Activated CD4-positive, alpha-beta T cell treated with anti-CD3 and anti-CD28 coated beads, Interleukin-2, amount 10 ng/mL, durations not matched to agents 24 days and 14 days (primary cell): ENCODE measurements at regions of chr20 and their contacts with region 1.

Region 1: DNA sequence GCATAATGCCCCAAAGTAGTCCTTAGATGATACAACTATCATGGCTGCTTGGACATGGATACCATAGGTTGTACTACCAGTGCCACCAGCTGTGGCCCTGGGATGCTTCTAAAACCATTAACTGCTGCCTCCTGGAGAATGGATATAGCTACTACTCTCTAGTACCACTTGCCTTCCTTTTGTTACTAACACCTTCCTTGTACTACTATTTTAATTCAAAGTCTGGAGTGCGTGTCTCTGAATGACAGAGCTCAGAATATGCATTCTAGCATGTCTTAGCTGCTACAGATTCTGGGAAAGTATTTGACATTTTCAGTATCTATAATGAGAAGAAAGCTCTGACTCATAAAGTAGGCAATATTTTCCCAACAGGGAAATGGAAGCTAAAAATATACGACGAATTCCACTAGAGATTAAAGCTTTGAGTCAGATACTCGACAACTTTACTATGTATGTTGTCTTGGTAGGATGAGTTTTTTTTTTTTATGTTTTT is 112.3 kb downstream of the PFDN4 start:
- DNase-seq: no peak
- H3K4me3 Mint-ChIP-seq: no peak overlapping the region
- H3K27ac Mint-ChIP-seq: peak overlapping the region; percentile 62
- H3K4me1 Mint-ChIP-seq: peaks cover 25% of the 10 kb centered on the region
- H3K27me3 Mint-ChIP-seq: no peaks in the 10 kb centered on the region

Region 2: DNA sequence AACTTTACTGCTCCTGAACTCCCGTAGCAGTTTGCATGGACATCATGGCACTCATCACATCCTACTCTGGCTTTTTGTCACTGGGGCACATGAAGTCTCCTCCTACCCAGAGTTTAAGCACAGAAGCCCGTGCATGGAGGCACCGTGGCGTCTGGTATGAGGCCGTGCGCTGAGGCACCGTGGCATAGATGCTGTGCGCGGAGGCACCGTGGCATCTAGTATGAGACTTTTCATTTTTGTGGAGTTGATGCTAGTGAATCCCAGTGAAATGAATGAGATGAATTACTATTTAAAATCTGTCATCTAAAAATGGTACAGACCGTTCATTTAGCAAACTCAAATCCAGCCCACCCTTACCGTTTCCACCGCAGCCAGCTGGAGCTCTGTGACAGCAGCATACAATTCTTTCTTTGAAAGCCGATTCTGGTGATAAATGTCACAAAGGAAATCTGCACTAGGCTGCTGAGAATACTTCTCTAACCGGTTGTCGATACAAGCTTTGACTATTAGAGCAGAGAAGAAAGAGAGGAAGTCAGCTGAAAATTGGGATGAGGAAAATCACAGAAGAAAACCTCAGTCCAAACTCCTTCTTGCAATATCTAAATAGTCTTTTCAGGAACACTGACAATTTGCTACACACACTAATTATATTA is 157.7 kb before region 1 on chr20:
- intact Hi-C with region 1: no loop called
- DNase-seq: no peak
- H3K4me3 Mint-ChIP-seq: no peak overlapping the region
- H3K27ac Mint-ChIP-seq: no peak overlapping the region
- H3K4me1 Mint-ChIP-seq: no peaks in the 10 kb centered on the region
- H3K27me3 Mint-ChIP-seq: peaks cover 23% of the 10 kb centered on the region

Region 3: DNA sequence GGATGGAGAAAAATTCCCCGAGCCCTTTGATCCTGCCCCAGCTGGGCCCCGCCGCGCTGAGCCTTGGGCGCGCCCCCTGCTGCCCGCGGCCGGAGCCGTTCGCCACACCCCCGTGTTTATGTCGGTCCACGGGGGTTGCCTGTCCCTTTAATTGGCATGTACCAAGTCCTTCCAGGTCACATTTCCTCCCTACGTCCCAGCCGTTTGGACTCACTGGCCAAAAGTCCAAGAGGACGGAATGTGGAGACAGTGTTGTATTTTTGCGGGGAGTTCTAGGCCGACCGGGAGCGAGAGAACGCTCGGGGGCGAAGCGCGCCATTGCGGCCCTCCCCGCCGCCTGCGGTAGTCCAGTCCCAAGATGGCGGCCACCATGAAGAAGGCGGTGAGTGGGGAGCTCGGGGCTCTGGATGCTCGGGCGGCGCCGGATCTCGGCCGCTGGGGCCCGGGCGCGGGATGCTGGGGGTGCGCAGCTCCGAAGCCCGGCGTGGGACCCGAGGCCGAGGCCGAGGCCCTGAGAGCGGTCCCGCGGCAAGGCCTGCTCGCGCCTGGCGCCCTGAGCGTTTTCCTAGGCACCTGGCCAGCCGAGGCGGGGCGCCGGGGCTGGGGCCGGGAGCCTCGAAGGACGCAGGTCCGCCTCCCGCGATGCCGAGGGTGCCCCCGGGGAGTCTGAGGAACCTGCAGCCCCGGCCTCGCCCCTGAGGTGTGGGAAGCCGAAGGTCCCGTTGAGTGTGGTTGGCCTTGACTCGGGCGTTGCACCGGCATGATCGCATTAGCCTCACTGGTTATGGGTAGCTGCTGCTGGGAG is 112.2 kb before region 1 on chr20 and contains the start of gene PFDN4:
- intact Hi-C with region 1: loop called (anchors 5 kb)
- DNase-seq: peak; percentile 95
- H3K4me3 Mint-ChIP-seq: peak within 1 kb of the TSS; percentile 88
- H3K27ac Mint-ChIP-seq: peak within 1 kb of the TSS; percentile 100
- H3K4me1 Mint-ChIP-seq: peaks cover 39% of the 10 kb centered on the region
- H3K27me3 Mint-ChIP-seq: no peaks in the 10 kb centered on the region
- total RNA-seq, gene PFDN4: 72.2 and 80.5 TPM in 2 replicates

Region 4: GRCh38 chr20:54219751-54220426 is 100.3 kb before region 1 on chr20:
- intact Hi-C with region 1: loop called (anchors 2 kb)
- DNase-seq: no peak
- H3K4me3 Mint-ChIP-seq: no peak overlapping the region
- H3K27ac Mint-ChIP-seq: no peak overlapping the region
- H3K4me1 Mint-ChIP-seq: peaks cover 20% of the 10 kb centered on the region
- H3K27me3 Mint-ChIP-seq: no peaks in the 10 kb centered on the region

Region 5: GRCh38 chr20:54267510-54268003 is 52.6 kb before region 1 on chr20:
- intact Hi-C with region 1: no loop called
- DNase-seq: no peak
- H3K4me3 Mint-ChIP-seq: no peak overlapping the region
- H3K27ac Mint-ChIP-seq: no peak overlapping the region
- H3K4me1 Mint-ChIP-seq: peaks cover 9% of the 10 kb centered on the region
- H3K27me3 Mint-ChIP-seq: peaks cover 1% of the 10 kb centered on the region

Region 6: GRCh38 chr20:54355641-54356280 is 35.6 kb after region 1 on chr20:
- intact Hi-C with region 1: loop called (anchors 1 kb)
- DNase-seq: peak; percentile 46
- H3K4me3 Mint-ChIP-seq: no peak overlapping the region
- H3K27ac Mint-ChIP-seq: no peak overlapping the region
- H3K4me1 Mint-ChIP-seq: peaks cover 2% of the 10 kb centered on the region
- H3K27me3 Mint-ChIP-seq: no peaks in the 10 kb centered on the region

Region 7: GRCh38 chr20:54382422-54382821 is 62.3 kb after region 1 on chr20:
- intact Hi-C with region 1: no loop called
- DNase-seq: no peak
- H3K4me3 Mint-ChIP-seq: no peak overlapping the region
- H3K27ac Mint-ChIP-seq: no peak overlapping the region
- H3K4me1 Mint-ChIP-seq: no peaks in the 10 kb centered on the region
- H3K27me3 Mint-ChIP-seq: no peaks in the 10 kb centered on the region

Region 8: GRCh38 chr20:54435015-54435414 is 114.9 kb after region 1 on chr20:
- intact Hi-C with region 1: no loop called
- DNase-seq: peak; percentile 27
- H3K4me3 Mint-ChIP-seq: no peak overlapping the region
- H3K27ac Mint-ChIP-seq: no peak overlapping the region
- H3K4me1 Mint-ChIP-seq: no peaks in the 10 kb centered on the region
- H3K27me3 Mint-ChIP-seq: no peaks in the 10 kb centered on the region